ENCODE measurements at regions of chr13 and their contacts with region 1.

Region 1: DNA sequence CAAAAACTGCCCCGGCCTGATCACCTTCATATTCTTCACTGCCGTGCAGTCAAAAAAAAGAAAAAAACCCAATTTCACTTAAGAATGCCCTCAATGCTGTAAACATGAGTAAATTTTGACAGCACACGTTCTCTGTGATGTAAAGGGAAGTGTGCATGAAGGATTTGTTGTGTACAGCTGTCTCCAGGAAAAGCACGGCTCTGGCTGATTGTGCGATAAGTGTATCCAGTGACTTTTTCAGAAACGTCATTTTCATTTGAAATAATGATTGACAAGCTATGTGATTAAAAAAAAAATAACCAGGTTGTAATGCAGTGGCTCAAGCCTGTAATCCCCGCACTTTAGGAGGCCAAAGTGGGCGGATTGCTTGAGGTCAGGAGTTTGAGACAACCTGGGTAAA is 39.6 kb downstream of the ANKRD10 start:
- DNase-seq: no peak
- H3K4me3 ChIP-seq: peak overlapping the region; percentile 35
- H3K4me3 Mint-ChIP-seq: no peak overlapping the region
- H3K27ac Mint-ChIP-seq: peak overlapping the region; percentile 55
- H3K4me1 ChIP-seq: peaks cover 19% of the 10 kb centered on the region; the same call in 1 of the 2 replicates
- H3K4me1 Mint-ChIP-seq: peaks cover 5% of the 10 kb centered on the region
- H3K27me3 ChIP-seq: no peaks in the 10 kb centered on the region
- H3K27me3 Mint-ChIP-seq: no peaks in the 10 kb centered on the region
- CTCF ChIP-seq: no peak

Region 2: GRCh38 chr13:110168999-110169933 is 706.0 kb before region 1 on chr13:
- CTCF ChIA-PET with region 1: no interaction called
- POLR2A ChIA-PET with region 1: no interaction called
- intact Hi-C with region 1: loop called (anchors 5 kb)
- DNase-seq: no peak
- H3K4me3 ChIP-seq: no peak overlapping the region
- H3K4me3 Mint-ChIP-seq: no peak overlapping the region
- H3K27ac Mint-ChIP-seq: no peak overlapping the region
- H3K4me1 ChIP-seq: no peaks in the 10 kb centered on the region
- H3K4me1 Mint-ChIP-seq: no peaks in the 10 kb centered on the region
- H3K27me3 ChIP-seq: no peaks in the 10 kb centered on the region
- H3K27me3 Mint-ChIP-seq: no peaks in the 10 kb centered on the region
- CTCF ChIP-seq: no peak